Calu3 (cell line): ENCODE measurements at regions of chr12 and their contacts with region 1.

Region 1: GRCh38 chr12:40107098-40107802 is 1.4 kb upstream of the SLC2A13 start:
- DNase-seq: peak; percentile 85
- H3K4me3 Mint-ChIP-seq: peak overlapping the region; percentile 71
- H3K27ac Mint-ChIP-seq: no peak overlapping the region
- H3K4me1 Mint-ChIP-seq: peaks cover 19% of the 10 kb centered on the region
- H3K27me3 Mint-ChIP-seq: no peaks in the 10 kb centered on the region
- CTCF ChIP-seq: peak; percentile 63

Region 2: DNA sequence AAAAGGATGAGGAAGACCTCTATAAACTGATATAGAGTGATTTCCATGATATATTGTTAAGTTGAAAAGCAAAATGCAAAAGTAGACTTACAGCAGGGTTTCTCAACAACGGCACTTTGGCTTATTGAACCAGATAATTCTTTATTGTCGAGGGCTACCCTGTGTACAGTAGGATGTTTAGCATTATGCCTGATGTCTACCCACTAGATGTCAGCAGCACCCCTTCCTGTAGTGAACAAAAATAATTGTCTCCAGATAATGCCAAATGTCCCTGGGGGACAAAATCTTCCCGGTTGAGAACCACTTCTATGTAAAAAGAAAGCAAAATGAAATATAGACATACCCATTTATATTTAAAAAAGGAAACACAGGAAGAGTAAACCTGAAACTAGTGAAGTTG is 520.0 kb before region 1 on chr12:
- CTCF ChIA-PET with region 1: no interaction called
- intact Hi-C with region 1: loop called (anchors 10 kb)
- DNase-seq: no peak
- H3K4me3 Mint-ChIP-seq: no peak overlapping the region
- H3K27ac Mint-ChIP-seq: no peak overlapping the region
- H3K4me1 Mint-ChIP-seq: no peaks in the 10 kb centered on the region
- H3K27me3 Mint-ChIP-seq: no peaks in the 10 kb centered on the region
- CTCF ChIP-seq: no peak

Region 3: GRCh38 chr12:39605501-39605900 is 501.7 kb before region 1 on chr12:
- CTCF ChIA-PET with region 1: no interaction called
- intact Hi-C with region 1: no loop called
- DNase-seq: no peak
- H3K4me3 Mint-ChIP-seq: no peak overlapping the region
- H3K27ac Mint-ChIP-seq: no peak overlapping the region
- H3K4me1 Mint-ChIP-seq: peaks cover 14% of the 10 kb centered on the region
- H3K27me3 Mint-ChIP-seq: no peaks in the 10 kb centered on the region
- CTCF ChIP-seq: no peak

Region 4: DNA sequence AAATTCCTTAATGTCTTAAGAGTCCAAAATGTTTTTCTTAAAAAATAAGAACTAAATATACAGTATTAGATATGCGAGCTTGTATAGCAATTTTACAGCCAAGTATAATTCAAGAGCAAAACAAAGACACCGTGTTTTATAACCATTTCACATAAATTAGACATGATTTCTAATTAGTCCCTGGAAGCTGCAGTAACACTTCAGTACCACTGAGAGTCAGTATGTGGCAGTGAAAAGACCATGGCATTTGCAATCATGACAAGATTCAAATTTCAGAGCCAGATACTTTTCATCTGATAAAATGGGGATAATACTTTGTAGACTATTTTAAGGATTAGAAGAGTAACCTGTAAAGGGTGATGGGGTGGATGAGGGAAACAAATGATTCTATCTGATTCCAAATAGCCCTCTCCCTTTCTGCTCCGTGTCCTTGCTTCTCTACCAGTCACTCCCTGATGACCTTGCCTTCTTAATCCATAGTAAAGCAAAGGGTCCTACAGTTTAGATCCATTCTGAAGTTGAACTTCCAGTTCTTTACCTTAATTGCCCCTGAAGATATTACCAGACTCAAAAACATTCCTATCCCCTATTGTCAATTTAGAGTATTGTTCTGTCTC is 342.2 kb before region 1 on chr12:
- CTCF ChIA-PET with region 1: no interaction called
- intact Hi-C with region 1: loop called (anchors 2 kb)
- DNase-seq: peak; percentile 3
- H3K4me3 Mint-ChIP-seq: no peak overlapping the region
- H3K27ac Mint-ChIP-seq: no peak overlapping the region
- H3K4me1 Mint-ChIP-seq: no peaks in the 10 kb centered on the region
- H3K27me3 Mint-ChIP-seq: no peaks in the 10 kb centered on the region
- CTCF ChIP-seq: peak; percentile 36

Region 5: DNA sequence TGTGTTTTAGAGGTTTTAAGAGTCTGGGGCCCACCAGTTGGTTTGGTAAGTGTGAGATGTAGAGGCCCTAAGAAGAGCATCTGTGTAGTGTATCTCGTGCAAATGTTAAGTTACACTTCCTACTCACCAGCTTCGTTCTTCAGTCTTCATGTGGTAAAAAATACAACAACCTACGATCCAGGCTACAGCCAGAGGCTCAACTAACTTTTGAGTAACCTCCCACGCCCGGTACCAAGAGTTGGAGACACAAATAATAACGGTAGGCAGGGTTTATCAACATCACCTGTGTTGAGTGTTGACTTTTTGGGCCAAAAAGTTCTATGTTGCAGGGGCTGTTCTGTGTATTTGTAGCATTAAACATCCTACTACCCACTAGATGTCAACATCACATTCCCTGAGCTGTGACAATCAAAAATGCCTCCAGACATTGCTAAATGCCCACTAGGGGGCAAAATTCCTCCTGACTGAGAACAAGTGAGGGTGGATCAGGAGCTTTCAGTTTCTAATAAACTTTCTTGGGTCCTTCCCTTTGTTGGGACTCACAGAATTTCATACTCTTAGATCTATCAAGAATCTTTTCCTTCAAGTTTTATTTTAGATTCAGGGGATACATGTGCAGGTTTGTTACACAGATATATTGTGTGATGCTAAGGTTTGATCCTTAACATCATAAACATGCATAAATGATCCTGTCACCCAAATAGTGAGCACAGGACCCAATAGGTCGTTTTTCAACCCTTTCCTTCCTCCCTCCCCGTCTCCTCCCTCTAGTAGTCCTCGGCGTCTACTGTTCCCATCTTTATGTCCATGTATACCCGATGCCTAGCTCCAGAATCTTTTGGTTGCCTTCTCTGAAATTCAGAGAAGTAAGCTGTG is 96.1 kb before region 1 on chr12:
- CTCF ChIA-PET with region 1: interaction called, 29 read pairs
- intact Hi-C with region 1: loop called (anchors 1 kb)
- DNase-seq: peak; percentile 54
- H3K4me3 Mint-ChIP-seq: no peak overlapping the region
- H3K27ac Mint-ChIP-seq: no peak overlapping the region
- H3K4me1 Mint-ChIP-seq: no peaks in the 10 kb centered on the region
- H3K27me3 Mint-ChIP-seq: no peaks in the 10 kb centered on the region
- CTCF ChIP-seq: no peak

Region 6: DNA sequence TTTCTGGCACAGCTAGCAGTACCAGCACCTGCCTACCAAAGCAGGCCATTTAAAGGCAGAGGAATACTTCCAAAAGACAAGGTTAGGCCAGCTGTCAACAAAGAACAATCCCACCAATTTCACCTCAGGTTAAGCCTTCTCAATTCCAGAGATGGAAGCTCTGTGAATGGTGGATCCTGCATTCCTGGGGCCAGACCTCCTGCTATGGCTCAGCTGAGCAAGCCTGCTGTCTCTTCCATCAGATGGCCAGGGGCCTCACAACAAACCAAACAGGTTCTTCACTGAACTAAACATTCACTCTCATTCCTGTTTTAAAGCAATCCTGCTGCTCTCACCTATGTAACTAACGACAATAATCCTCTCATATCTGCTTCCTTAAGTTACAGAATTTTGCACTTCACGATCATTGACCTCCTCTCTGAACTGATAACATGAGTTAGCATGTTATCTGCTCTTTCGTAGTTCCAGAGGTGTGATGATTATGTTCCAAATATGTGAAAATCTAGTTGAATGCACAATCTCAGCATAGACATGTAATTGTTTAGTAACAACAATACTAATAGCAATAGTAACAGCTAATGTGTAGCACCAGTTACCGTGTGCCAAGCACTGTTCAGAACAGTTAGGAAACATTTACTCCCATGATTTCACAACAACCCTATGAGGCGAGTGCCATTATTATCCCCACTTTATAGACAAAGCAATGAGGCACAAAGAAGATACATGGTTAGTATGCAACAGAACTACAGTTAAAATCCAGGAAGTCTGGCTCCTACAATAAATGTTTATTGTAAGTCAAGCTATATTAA is 74.6 kb before region 1 on chr12:
- CTCF ChIA-PET with region 1: no interaction called
- intact Hi-C with region 1: loop called (anchors 5 kb)
- DNase-seq: no peak
- H3K4me3 Mint-ChIP-seq: no peak overlapping the region
- H3K27ac Mint-ChIP-seq: no peak overlapping the region
- H3K4me1 Mint-ChIP-seq: peaks cover 9% of the 10 kb centered on the region
- H3K27me3 Mint-ChIP-seq: no peaks in the 10 kb centered on the region
- CTCF ChIP-seq: no peak